Body of pancreas (tissue), 4 donors: ENCODE measurements at regions of chr3 and their contacts with region 1.

Region 1: DNA sequence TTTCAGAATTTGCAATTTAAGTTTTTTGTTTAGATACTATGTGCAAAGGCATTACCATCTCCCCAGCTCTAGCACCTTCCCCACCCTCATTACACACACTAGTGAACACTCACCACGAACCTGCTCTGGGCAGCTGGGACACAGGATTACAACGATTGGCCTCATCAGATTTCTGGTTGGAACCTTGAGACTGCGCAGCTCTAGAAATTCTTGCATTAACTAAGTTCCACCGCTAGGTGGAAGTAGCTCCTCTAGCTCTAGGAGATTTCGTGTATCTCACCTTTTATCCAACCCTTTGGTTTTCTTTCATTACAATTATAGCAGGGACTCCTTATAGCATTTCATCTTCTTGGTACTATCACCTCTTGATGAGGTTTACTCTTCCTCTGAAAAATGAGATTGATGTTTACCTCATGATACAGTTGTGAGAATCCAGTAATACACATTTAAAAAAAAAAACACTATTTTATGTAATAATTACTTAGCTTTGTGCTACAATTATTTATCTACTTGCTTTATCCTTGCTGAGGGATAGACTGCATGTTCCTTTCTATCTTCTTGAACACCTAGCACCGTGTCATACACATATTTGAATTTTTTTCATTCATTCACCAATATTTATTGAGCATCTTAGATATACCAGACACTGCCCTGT is 28.7 kb upstream of the PLOD2 start:
- DNase-seq: peak; percentile 19 to 27 (median 26)
- ATAC-seq: peak; percentile 86
- H3K4me3 ChIP-seq: no peak overlapping the region
- H3K27ac ChIP-seq: no peak overlapping the region
- H3K4me1 ChIP-seq: peaks cover 2% of the 10 kb centered on the region
- H3K27me3 ChIP-seq: no peaks in the 10 kb centered on the region
- CTCF ChIP-seq: peak; percentile 64 to 74 (median 68)
- POLR2A ChIP-seq: no peak

Region 2: GRCh38 chr3:145798692-145799537 is 390.7 kb before region 1 on chr3:
- intact Hi-C with region 1: no loop called
- DNase-seq: no peak
- ATAC-seq: no peak
- H3K4me3 ChIP-seq: no peak overlapping the region
- H3K27ac ChIP-seq: no peak overlapping the region
- H3K4me1 ChIP-seq: no peaks in the 10 kb centered on the region
- H3K27me3 ChIP-seq: no peaks in the 10 kb centered on the region
- CTCF ChIP-seq: no peak
- POLR2A ChIP-seq: no peak

Region 3: GRCh38 chr3:146065573-146066006 is 124.1 kb before region 1 on chr3:
- intact Hi-C with region 1: loop called (anchors 10 kb)
- DNase-seq: peak in 2 of 4 donors; percentile 11 to 44
- ATAC-seq: no peak
- H3K4me3 ChIP-seq: no peak overlapping the region
- H3K27ac ChIP-seq: no peak overlapping the region
- H3K4me1 ChIP-seq: no peaks in the 10 kb centered on the region
- H3K27me3 ChIP-seq: no peaks in the 10 kb centered on the region
- CTCF ChIP-seq: peak; percentile 48 to 92 (median 76)
- POLR2A ChIP-seq: no peak